ENCODE measurements at regions of chr10 and their contacts with region 1.

Region 1: DNA sequence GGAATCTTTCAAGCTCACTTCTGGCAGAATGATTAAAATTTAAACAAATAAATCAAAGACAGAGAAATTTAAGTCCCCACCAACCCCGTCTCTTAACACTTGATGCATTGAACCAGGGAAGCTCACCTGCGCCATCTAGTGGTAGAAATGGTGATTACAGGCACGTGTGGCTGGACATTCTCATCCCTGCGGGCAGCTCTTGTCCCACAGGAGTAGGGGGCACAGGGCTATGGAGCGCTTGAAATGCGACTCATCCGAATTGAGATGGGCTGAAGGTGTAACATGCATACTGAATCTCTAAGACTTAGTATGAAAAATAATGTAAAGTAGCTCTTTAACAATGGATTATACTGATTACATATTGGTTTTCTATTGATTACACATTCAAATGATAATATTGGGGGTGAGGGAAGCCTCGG is 24.8 kb upstream of the SLIT1 start:
- DNase-seq: peak; percentile 61
- ATAC-seq: peak; percentile 80
- H3K4me3 ChIP-seq: no peak overlapping the region
- H3K27ac ChIP-seq: no peak overlapping the region
- H3K4me1 ChIP-seq: peaks cover 8% of the 10 kb centered on the region
- H3K27me3 ChIP-seq: peaks cover 0 to 5% of the 10 kb centered on the region in 2 experiments; a peak in 2 of 5 replicates
- CTCF ChIP-seq: peak; percentile 89
- EP300 ChIP-seq: no peak
- POLR2A ChIP-seq: no peak
- RAD21 ChIP-seq: peak; percentile 84

Region 2: GRCh38 chr10:97037365-97038361 is 172.9 kb before region 1 on chr10:
- CTCF ChIA-PET with region 1: interaction called, 15 read pairs
- POLR2A ChIA-PET with region 1: no interaction called
- in situ Hi-C with region 1: no loop called
- intact Hi-C with region 1: loop called (anchors 1 kb)
- DNase-seq: peak; percentile 77
- ATAC-seq: peak; percentile 95
- H3K4me3 ChIP-seq: peak overlapping the region; percentile 22 to 65 (median 29)
- H3K27ac ChIP-seq: no peak overlapping the region
- H3K4me1 ChIP-seq: peaks cover 29% of the 10 kb centered on the region
- H3K27me3 ChIP-seq: peaks cover 3 to 28% of the 10 kb centered on the region in 2 experiments; a peak in 4 of 5 replicates
- CTCF ChIP-seq: peak; percentile 92
- EP300 ChIP-seq: no peak
- POLR2A ChIP-seq: no peak
- RAD21 ChIP-seq: peak; percentile 67

Region 3: DNA sequence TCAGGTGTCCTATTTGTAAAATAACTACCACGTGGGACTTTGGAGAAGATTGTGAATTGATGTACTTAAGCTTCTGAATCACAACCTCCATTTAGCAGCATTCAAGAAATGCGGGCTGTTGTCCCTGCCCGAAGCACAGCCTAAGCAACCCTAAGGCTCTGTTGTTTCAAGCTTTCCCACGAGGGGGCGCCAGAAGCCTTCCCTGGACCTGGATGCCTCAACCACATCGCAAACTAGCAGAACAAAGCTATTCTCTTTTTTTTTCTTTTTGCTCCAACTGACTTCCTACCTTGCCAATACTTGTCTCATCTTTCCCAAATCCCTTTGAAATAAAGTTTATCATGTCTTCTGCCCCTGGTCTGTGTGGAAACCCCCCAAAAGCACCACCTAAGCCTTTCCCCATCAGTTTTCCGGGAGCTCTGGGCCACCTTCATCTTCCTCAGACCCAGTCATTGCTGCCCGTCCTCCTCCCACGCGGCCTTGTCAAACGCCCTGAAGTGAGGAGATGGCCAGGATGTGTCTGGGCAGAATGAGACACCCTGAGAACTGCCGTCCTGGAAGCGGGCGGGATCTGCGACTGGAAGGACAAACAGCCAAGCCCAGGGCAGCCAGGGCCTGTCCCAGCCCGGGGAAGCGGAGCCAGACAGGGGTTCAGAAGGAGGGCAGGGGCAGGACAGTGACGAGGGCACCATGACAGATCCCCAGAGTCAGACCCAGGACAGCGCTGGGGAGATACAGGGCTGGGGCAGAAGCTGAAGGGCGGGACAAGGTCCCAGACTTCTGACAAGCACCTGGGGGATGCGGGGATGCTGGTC is 137.5 kb before region 1 on chr10:
- CTCF ChIA-PET with region 1: interaction called, 56 read pairs
- POLR2A ChIA-PET with region 1: interaction called, 5 read pairs
- in situ Hi-C with region 1: loop called (anchors 5 kb)
- intact Hi-C with region 1: loop called (anchors 1 kb)
- DNase-seq: peak; percentile 55
- ATAC-seq: peak; percentile 79
- H3K4me3 ChIP-seq: no peak overlapping the region
- H3K27ac ChIP-seq: no peak overlapping the region
- H3K4me1 ChIP-seq: no peaks in the 10 kb centered on the region
- H3K27me3 ChIP-seq: peaks cover 12 to 64% of the 10 kb centered on the region in 2 experiments; a peak in 4 of 5 replicates
- CTCF ChIP-seq: peak; percentile 90
- EP300 ChIP-seq: no peak
- POLR2A ChIP-seq: no peak
- RAD21 ChIP-seq: peak; percentile 80

Measured in HepG2 (cell line).